ENCODE measurements at regions of chrX and their contacts with region 1.

Region 1: DNA sequence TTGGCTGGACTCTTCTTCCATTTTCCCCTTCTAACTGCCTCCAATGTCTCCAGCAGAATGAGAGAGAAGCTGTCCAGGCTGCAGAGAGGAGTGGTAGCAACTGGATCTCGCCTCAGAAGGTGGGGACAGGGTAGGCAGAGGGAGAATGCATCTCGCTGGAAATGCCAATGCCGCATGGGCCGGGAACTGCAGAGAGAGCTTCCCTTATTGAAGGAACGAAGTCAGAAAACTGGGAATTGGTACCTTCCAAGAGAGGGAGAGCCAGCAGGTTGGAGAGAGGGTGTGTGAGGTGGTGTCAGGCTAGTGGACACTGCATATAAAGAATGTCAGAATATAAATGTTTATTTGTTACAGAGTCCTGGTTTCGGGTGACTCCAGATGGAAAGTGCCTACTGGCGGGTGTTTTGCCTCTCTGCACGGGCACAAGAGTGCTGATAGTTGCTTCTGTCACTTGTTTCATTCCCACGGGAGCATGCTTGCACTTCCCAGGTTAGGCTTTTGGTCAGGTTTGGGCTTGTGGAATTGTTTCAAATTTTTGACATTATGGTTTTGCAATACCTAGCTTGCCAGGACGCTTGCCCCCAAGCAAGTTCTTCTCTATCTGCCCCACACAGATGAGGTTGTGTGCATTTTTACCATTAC is 156.8 kb upstream of the STS start:
- DNase-seq: no peak
- H3K4me3 ChIP-seq: no peak overlapping the region
- H3K4me3 Mint-ChIP-seq: no peak overlapping the region
- H3K27ac Mint-ChIP-seq: peak overlapping the region; percentile 76
- H3K4me1 ChIP-seq: peaks cover 40% of the 10 kb centered on the region
- H3K4me1 Mint-ChIP-seq: peaks cover 7% of the 10 kb centered on the region
- H3K27me3 ChIP-seq: no peaks in the 10 kb centered on the region
- H3K27me3 Mint-ChIP-seq: no peaks in the 10 kb centered on the region
- CTCF ChIP-seq: no peak

Region 2: GRCh38 chrX:6954836-6955235 is 35.8 kb before region 1 on chrX:
- CTCF ChIA-PET with region 1: no interaction called
- POLR2A ChIA-PET with region 1: no interaction called
- intact Hi-C with region 1: loop called (anchors 1 kb)
- DNase-seq: peak; percentile 61 to 80
- H3K4me3 ChIP-seq: no peak overlapping the region
- H3K4me3 Mint-ChIP-seq: peak overlapping the region; percentile 27
- H3K27ac Mint-ChIP-seq: peak overlapping the region; percentile 76
- H3K4me1 ChIP-seq: peaks cover 41% of the 10 kb centered on the region
- H3K4me1 Mint-ChIP-seq: peaks cover 13% of the 10 kb centered on the region
- H3K27me3 ChIP-seq: no peaks in the 10 kb centered on the region
- H3K27me3 Mint-ChIP-seq: no peaks in the 10 kb centered on the region
- CTCF ChIP-seq: no peak

Region 3: GRCh38 chrX:7139202-7140081 is 148.8 kb after region 1 on chrX:
- CTCF ChIA-PET with region 1: no interaction called
- POLR2A ChIA-PET with region 1: no interaction called
- intact Hi-C with region 1: no loop called
- DNase-seq: no peak
- H3K4me3 ChIP-seq: no peak overlapping the region
- H3K4me3 Mint-ChIP-seq: no peak overlapping the region
- H3K27ac Mint-ChIP-seq: no peak overlapping the region
- H3K4me1 ChIP-seq: peaks cover 27% of the 10 kb centered on the region
- H3K4me1 Mint-ChIP-seq: peaks cover 10% of the 10 kb centered on the region
- H3K27me3 ChIP-seq: no peaks in the 10 kb centered on the region
- H3K27me3 Mint-ChIP-seq: no peaks in the 10 kb centered on the region
- CTCF ChIP-seq: no peak